ENCODE measurements at regions of chr2 and their contacts with region 1.

Region 1: DNA sequence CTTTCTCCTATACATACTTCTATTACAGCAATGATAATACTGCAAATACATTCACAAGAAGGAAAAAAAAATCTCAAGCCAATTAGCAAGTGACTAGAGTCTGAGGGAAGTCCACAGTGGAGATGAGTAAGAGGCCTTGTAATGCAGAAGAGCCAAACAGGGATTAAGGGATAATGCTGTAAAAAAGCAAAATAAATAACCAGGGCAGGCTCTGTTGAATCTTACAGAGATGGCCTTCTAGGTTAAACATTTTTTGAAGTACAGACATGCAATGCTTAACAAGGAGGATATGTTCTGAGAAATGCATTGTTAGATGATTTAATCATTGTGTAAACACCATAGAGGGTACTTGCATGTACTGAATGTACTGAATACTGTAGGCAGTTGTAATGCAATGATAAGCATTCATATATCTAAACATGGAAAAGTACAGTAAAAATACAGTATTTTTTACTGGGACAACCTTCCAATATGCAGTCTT is 122.1 kb upstream of the RMDN2 start:
- DNase-seq: peak; percentile 91
- ATAC-seq: peak; percentile 95
- H3K4me3 ChIP-seq: peak overlapping the region; percentile 44
- H3K27ac ChIP-seq: peak overlapping the region; percentile 89
- H3K4me1 ChIP-seq: peaks cover 41% of the 10 kb centered on the region
- H3K27me3 ChIP-seq: no peaks in the 10 kb centered on the region
- CTCF ChIP-seq: no peak

Region 2: GRCh38 chr2:37472959-37473358 is 330.0 kb before region 1 on chr2:
- CTCF ChIA-PET with region 1: no interaction called
- POLR2A ChIA-PET with region 1: no interaction called
- intact Hi-C with region 1: loop called (anchors 5 kb)
- DNase-seq: peak; percentile 92
- ATAC-seq: peak; percentile 92
- H3K4me3 ChIP-seq: peak overlapping the region; percentile 17; the same call in 1 of the 2 replicates
- H3K27ac ChIP-seq: peak overlapping the region; percentile 82
- H3K4me1 ChIP-seq: peaks cover 35% of the 10 kb centered on the region
- H3K27me3 ChIP-seq: no peaks in the 10 kb centered on the region
- CTCF ChIP-seq: no peak

Region 3: GRCh38 chr2:37585982-37586621 is 216.8 kb before region 1 on chr2:
- CTCF ChIA-PET with region 1: interaction called, 6 read pairs
- POLR2A ChIA-PET with region 1: no interaction called
- intact Hi-C with region 1: loop called (anchors 2 kb)
- DNase-seq: peak; percentile 95
- ATAC-seq: peak; percentile 64
- H3K4me3 ChIP-seq: peak overlapping the region; percentile 41; the same call in 1 of the 2 replicates
- H3K27ac ChIP-seq: peak overlapping the region; percentile 90
- H3K4me1 ChIP-seq: peaks cover 84% of the 10 kb centered on the region
- H3K27me3 ChIP-seq: no peaks in the 10 kb centered on the region
- CTCF ChIP-seq: no peak

Region 4: GRCh38 chr2:37767956-37768925 is 34.7 kb before region 1 on chr2:
- CTCF ChIA-PET with region 1: no interaction called
- POLR2A ChIA-PET with region 1: no interaction called
- intact Hi-C with region 1: loop called (anchors 1 kb)
- DNase-seq: peak; percentile 93
- ATAC-seq: peak; percentile 96
- H3K4me3 ChIP-seq: peak overlapping the region; percentile 13; the same call in 1 of the 2 replicates
- H3K27ac ChIP-seq: peak overlapping the region; percentile 12; the same call in 1 of the 2 replicates
- H3K4me1 ChIP-seq: peaks cover 51% of the 10 kb centered on the region
- H3K27me3 ChIP-seq: no peaks in the 10 kb centered on the region
- CTCF ChIP-seq: no peak

Region 5: DNA sequence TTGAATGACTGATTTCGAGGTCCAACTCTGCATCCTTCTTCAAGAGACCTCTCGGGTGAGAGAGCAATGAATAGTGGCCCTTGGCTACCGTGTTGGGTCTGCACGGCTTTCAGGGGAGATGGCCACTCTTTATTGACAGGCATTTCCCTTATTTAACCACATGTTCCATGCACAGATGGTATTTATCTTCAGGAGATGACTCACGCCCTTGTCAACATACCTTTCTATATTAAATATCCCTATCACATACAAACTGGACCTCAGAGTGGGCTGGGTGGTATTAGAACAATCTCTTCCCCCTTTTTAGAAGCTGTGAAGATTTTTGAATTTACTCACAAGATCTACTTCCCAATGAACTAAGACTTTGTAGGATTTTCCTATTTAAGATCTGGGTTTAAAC is 21.9 kb before region 1 on chr2:
- CTCF ChIA-PET with region 1: no interaction called
- POLR2A ChIA-PET with region 1: no interaction called
- intact Hi-C with region 1: loop called (anchors 2 kb)
- DNase-seq: peak; percentile 86
- ATAC-seq: peak; percentile 69
- H3K4me3 ChIP-seq: no peak overlapping the region; the same call in 1 of the 2 replicates
- H3K27ac ChIP-seq: peak overlapping the region; percentile 56
- H3K4me1 ChIP-seq: peaks cover 58% of the 10 kb centered on the region
- H3K27me3 ChIP-seq: no peaks in the 10 kb centered on the region
- CTCF ChIP-seq: no peak

Measured in PC-3 (cell line).